HEK293 (cell line): ENCODE measurements at regions of chr3 and their contacts with region 1.

Region 1: DNA sequence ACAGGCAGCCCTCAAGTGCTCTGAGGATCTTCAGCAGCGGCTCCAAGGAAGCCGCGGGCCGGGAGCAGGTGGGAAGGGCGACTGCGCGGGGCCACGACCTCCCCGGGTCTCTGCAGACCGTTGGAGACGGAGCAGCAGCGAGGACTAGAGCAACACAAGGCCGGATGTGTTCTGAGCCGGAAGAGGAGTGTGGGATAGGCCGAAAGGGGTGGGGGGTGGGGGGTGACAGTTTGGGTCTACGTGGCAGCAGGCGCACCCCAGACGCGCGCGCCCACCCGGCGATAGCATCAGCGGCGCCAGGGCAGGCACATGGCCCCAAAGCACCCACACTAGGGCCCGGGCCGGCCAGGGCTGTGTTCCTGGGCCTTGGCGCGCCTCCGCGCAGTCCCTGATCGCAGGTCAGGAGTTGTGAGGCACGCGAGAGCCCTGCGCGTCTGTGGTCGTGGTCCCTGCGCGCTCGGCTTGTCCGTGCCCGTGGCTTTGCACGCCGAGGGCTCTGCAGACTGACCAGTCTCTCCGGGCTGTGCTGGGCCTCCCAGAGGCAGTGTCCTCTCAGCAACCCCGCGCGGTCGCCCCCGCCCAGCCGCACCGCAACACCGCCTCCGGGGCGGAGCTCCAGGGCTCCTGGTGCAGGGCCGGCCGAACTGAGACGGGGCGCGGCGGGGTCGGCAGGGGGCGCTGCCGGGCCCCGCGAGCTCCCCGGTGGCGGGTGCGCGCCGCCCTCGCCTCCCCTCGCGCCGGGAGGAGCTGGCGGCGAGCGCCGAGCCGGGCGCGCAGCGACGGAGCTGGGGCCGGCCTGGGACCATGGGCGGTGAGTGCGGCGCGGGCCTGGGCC is at the start of gene PXYLP1:
- H3K4me3 ChIP-seq: peak within 1 kb of the TSS; percentile 79
- H3K27ac ChIP-seq: peak within 1 kb of the TSS; percentile 65; the same call in 1 of the 2 replicates
- H3K4me1 ChIP-seq: no peaks in the 10 kb centered on the region; the same call in 1 of the 2 replicates
- CTCF ChIP-seq: no peak

Region 2: DNA sequence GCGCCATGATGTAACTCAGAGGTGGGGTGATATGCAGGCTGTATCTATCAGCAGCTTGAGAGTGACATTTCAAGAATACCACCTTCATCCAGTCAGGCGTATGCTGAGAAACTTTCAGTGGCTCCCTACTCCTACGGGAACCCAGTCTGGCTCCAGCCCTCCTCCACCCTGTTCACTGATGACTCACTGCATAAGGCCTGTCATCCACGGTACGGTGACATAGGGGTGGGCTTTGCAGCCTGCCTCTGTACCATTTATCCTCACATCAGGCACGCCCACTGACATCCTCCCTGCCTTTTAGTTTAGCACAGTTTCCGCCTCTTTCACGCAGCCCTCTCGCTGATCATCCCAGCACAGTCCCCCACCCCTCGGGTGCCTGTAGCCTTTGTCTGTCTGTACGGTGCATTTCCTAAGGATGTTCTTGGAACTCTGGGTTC is 12.0 kb after region 1 on chr3:
- CTCF ChIA-PET with region 1: interaction called, 15 read pairs
- POLR2A ChIA-PET with region 1: interaction called, 5 read pairs
- H3K4me3 ChIP-seq: no peak overlapping the region
- H3K27ac ChIP-seq: no peak overlapping the region
- H3K4me1 ChIP-seq: peaks cover 6% of the 10 kb centered on the region; the same call in 1 of the 2 replicates
- CTCF ChIP-seq: no peak

Region 3: GRCh38 chr3:141250342-141250741 is 19.0 kb after region 1 on chr3:
- CTCF ChIA-PET with region 1: interaction called, 38 read pairs
- POLR2A ChIA-PET with region 1: interaction called, 7 read pairs
- H3K4me3 ChIP-seq: no peak overlapping the region
- H3K27ac ChIP-seq: no peak overlapping the region
- H3K4me1 ChIP-seq: no peaks in the 10 kb centered on the region
- CTCF ChIP-seq: no peak

Region 4: DNA sequence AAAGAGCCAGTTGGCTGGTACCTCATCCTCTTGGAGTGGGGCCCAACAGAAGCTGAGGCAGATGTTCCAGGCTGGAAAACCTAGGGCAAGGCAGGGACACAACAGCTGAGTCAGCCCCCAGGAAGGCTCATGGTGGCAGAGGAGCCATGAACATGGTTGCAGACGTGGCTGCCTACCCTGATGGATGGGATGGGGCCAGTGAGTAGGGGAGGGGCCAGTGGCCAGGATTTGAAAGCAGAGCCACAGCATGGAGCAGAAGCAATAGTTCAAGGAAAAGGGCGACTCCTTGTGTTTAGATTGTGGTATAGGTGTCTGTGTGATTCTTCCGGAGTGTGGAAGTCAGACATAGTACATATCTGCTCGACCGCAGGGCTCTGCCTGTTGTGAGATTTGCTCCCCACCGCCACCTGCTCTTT is 24.5 kb after region 1 on chr3:
- CTCF ChIA-PET with region 1: interaction called, 38 read pairs
- POLR2A ChIA-PET with region 1: interaction called, 7 read pairs
- H3K4me3 ChIP-seq: no peak overlapping the region
- H3K27ac ChIP-seq: no peak overlapping the region
- H3K4me1 ChIP-seq: no peaks in the 10 kb centered on the region
- CTCF ChIP-seq: no peak